ENCODE measurements at regions of chr17 and their contacts with region 1.

Region 1: DNA sequence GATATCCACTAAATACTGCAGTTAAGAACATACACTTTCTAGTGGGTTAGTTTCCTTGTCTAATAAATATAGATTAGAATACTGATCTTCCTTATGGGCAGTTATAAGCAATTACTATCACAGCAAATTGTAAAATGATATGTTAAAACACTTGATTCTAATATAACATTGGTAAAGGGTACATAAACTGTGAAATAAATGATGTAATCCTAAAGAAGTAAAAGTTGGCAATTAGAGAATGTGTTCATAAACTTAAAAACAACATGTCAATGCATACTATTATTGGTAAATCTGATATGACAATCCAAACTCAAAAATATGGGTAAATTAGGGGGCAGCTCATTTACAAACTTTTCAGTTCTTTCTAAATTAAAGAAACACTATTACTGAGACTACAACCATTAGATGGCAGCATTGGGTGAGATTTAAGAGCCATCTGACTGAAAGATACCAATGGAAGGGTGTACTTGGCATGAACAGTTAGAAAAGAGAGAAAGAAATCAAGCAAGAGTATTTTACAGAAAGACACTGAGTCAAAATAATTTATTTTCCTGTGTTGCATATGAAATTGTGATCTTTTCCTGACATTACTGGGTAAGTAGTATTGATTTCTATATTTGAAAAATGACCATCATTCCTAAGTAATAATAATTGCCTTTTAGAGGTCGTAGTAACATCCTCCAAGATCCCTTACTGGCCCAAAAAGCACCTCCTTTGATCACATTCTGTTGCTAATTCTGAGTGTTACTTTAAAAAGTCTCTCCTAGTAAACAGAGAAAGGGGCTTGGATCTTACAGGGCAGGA is 119.6 kb downstream of the SPAG9 start:
- DNase-seq: no peak
- H3K4me3 ChIP-seq: no peak overlapping the region
- H3K27ac ChIP-seq: peak overlapping the region in 1 of 2 donors; percentile 24
- H3K4me1 ChIP-seq: no peaks in the 10 kb centered on the region
- H3K27me3 ChIP-seq: no peaks in the 10 kb centered on the region
- CTCF ChIP-seq: peak; percentile 44 to 61 (median 47)

Region 2: DNA sequence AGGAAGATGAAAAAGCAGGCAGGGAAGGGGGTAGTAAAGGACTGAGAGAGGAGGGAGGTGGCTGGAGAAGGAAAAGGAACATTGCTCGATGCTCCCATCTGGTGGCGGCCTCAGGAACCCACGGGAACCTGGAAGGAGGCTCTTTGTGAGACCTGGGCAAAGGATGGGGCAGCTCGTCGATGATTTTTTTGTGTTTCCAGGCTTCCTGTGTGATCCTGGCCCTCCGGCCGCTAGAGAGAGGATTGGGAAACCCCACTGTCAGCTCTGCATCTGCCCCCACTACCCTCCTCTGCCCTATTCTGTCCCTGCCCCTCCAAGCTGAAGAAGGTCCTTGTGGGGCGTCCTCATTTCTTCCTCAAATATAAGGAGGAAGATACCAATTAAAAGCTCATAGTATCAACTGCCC is 159.1 kb before region 1 on chr17:
- intact Hi-C with region 1: no loop called
- DNase-seq: peak in 1 of 2 donors; percentile 78
- H3K4me3 ChIP-seq: no peak overlapping the region
- H3K27ac ChIP-seq: no peak overlapping the region
- H3K4me1 ChIP-seq: no peaks in the 10 kb centered on the region
- H3K27me3 ChIP-seq: no peaks in the 10 kb centered on the region
- CTCF ChIP-seq: peak; percentile 68 to 79 (median 79)

Region 3: DNA sequence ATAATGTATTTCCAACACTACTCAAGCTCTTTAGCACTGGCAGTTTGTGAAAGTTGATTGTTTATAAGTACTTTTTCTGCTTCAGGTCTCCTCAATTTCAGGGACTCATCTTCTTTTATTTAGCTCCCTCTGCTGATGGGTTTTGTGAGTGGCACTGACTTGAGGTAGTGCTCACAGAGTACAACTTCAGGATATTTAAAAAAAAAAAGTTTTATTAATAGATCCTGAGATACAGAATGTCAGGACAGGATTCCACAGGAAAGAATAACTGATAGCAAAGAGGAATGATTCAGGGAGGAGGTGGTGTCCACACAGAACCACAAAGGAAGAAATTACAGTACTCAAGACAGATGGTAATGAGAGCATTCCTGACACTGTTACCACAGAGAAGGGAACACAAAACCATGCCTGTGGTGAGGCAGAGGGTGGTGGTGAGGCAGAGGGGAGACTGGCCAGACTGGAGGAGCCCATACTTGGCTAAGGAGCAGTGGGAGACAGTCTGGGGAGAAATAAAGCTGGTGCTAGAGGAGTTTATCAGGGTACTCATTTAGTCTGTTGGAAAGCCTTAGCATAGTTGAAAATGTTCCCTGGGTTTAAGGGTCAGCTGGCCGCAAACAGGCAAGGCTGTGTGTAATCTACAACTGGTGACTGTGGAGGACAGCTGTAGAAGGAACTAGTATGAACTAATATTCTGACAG is 55.9 kb after region 1 on chr17:
- intact Hi-C with region 1: loop called (anchors 5 kb)
- DNase-seq: no peak
- H3K4me3 ChIP-seq: no peak overlapping the region
- H3K27ac ChIP-seq: peak overlapping the region; percentile 20 to 45
- H3K4me1 ChIP-seq: peaks cover 0 to 9% of the 10 kb centered on the region in 2 donors
- H3K27me3 ChIP-seq: no peaks in the 10 kb centered on the region
- CTCF ChIP-seq: peak; percentile 24 to 54 (median 27)

Region 4: GRCh38 chr17:51166197-51166986 is 165.4 kb after region 1 on chr17 and contains the start of gene NME2:
- intact Hi-C with region 1: loop called (anchors 5 kb)
- DNase-seq: peak; percentile 66 to 94
- H3K4me3 ChIP-seq: peak within 1 kb of the TSS; percentile 80 to 99
- H3K27ac ChIP-seq: peak within 1 kb of the TSS; percentile 97 to 98
- H3K4me1 ChIP-seq: peaks cover 0 to 10% of the 10 kb centered on the region in 2 donors
- H3K27me3 ChIP-seq: no peaks in the 10 kb centered on the region
- CTCF ChIP-seq: no peak
- total RNA-seq, gene NME2: 638 TPM